Motor neuron (in vitro differentiated cells): ENCODE measurements at regions of chr3 and their contacts with region 1.

Region 1: GRCh38 chr3:169966428-169966950 is at the start of gene SEC62:
- ATAC-seq: peak; percentile 92 to 97 (median 95)
- H3K4me3 ChIP-seq: peak within 1 kb of the TSS; percentile 69 to 91 (median 76)
- H3K27ac ChIP-seq: peak within 1 kb of the TSS; percentile 97 to 99
- H3K4me1 ChIP-seq: peaks cover 0 to 20% of the 10 kb centered on the region in 2 donors
- total RNA-seq, gene SEC62: 50.3 to 124 (median 62.7) TPM

Region 2: DNA sequence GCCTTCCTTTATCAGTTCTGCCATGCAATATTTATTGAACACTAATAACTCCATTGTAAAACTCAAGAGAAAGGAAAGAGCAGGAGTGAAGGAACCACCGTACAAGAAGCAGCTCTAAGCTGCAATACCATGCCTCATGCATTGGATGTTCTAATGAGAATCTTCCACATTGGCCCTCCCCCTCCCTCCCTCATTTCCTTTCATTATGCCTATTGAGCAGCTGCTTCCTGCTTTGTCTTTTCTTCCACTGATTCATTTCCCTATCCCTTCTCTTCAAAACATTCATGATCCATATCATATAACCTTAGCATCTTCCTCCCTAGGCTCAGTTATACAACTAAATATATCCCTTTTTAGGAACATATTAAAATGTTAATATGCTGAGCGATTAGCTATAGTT is 1172.1 kb before region 1 on chr3:
- in situ Hi-C with region 1: no loop called
- ATAC-seq: no peak
- H3K4me3 ChIP-seq: no peak overlapping the region
- H3K27ac ChIP-seq: no peak overlapping the region
- H3K4me1 ChIP-seq: no peaks in the 10 kb centered on the region

Region 3: GRCh38 chr3:169790687-169791429 is 175.6 kb before region 1 on chr3:
- in situ Hi-C with region 1: loop called in 1 of 9 experiments (anchors 25 kb)
- ATAC-seq: peak in 1 of 8 experiments; percentile 31
- H3K4me3 ChIP-seq: no peak overlapping the region
- H3K27ac ChIP-seq: no peak overlapping the region
- H3K4me1 ChIP-seq: no peaks in the 10 kb centered on the region

Region 4: DNA sequence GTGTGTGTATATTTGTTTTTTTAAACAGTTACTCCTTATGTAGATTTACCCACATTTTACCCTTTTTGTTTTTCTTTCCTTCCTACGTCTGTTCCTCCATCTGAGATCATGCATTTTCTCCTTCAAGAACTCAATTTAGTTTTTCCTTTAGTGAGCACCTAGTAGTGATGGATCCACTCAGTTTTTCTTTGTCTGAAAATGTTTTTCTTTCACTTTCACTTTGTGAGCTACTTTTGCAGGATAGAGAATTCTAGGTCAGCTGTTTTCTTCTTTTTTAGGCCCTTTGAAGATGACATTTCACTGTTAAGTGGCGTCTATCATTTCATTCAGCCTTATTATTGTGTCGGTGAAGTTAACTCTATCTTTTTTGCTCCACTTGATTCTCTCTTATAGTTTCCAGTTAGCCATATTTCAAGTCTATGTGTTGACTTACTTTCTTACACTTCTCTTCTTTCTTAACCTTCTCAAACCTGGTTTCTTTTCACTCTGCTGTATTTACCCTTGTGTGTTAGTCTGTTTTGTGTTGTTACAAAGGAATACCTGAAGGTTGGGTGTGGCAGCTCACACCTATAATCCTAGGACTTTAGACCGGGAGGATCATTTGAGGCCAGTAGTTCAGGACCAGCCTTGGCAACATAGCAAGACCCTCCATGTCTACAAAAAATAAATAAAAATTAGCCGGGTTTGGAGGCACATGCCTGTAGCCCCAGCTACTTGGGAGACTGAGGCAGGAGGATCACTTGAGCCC is 311.5 kb after region 1 on chr3:
- in situ Hi-C with region 1: no loop called
- ATAC-seq: no peak
- H3K4me3 ChIP-seq: no peak overlapping the region
- H3K27ac ChIP-seq: no peak overlapping the region
- H3K4me1 ChIP-seq: no peaks in the 10 kb centered on the region

Region 5: GRCh38 chr3:170383567-170383966 is 417.1 kb after region 1 on chr3:
- in situ Hi-C with region 1: no loop called
- ATAC-seq: no peak
- H3K4me3 ChIP-seq: no peak overlapping the region
- H3K27ac ChIP-seq: no peak overlapping the region
- H3K4me1 ChIP-seq: no peaks in the 10 kb centered on the region